GM12878 (cell line): ENCODE measurements at regions of chr16 and their contacts with region 1.

Region 1: DNA sequence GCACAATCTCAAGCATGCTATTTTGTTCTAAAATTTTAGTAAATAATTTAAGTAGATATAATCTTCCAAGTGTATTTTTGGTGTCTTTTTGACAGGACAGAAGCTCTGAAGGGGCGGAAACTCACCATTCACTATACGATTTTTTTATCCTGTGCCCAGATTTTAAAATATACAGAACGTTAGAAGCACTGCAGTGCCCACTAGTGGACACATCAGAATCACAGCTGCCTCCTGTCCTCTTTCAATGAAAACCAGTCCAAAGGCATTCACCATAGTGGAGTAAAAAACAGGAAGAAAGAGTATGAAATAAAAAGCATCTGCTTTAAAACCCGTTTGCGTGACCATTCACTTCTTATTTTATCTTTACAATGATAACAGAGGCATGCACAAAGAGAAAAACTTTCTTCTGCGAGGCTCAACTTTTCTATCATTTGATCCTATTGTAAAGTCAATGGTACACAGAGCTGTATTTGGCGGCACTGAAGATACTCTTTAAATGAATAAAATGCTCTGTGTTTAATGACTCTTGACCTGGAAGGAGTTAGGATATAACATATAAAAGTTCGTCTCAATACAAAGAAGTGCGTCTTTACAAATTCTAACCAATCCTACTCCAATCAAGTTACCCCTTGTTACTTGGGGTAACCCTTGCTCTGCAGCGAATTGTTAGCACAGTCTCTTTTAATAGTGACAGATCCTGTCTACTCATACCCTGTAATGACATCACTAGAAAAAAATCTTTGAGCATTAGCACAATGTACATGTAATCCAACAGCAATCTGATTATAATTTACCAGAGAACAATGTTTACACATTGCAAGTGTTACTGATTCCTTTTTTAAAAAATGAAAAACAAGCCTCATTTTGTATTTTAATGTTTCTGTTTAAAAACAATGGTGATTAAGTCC is 339.8 kb upstream of the PSMD7 start:
- DNase-seq: peak; percentile 2
- ATAC-seq: peak; percentile 82
- H3K4me3 ChIP-seq: no peak overlapping the region
- H3K27ac ChIP-seq: no peak overlapping the region
- H3K4me1 ChIP-seq: no peaks in the 10 kb centered on the region
- H3K27me3 ChIP-seq: no peaks in the 10 kb centered on the region
- CTCF ChIP-seq: peak; percentile 78 to 85 (median 78)
- EP300 ChIP-seq: no peak
- POLR2A ChIP-seq: no peak
- RAD21 ChIP-seq: peak; percentile 70

Region 2: DNA sequence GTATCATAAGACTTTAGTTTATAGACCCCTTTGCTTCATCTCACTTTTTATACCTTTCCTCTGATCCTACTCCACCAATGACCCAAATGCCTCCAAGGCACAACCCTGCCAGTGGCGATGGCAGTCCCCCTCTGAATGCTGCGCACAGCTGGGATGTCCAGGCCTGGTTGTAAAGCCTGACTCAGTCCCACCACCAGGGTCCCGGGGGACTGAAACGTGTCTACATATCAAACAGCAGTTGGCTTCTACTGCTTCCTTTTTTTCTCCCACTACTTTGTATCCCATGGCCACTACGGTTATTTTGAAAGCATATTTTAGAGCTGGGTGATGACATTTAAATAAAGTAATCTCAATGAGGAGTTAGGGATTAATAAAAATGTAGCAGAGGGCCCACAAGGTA is 10.0 kb after region 1 on chr16:
- CTCF ChIA-PET with region 1: interaction called, 17 read pairs
- POLR2A ChIA-PET with region 1: no interaction called
- RAD21 ChIA-PET with region 1: no interaction called
- SMC1A ChIA-PET with region 1: no interaction called
- in situ Hi-C with region 1: no loop called
- intact Hi-C with region 1: no loop called
- DNase-seq: no peak
- ATAC-seq: no peak
- H3K4me3 ChIP-seq: no peak overlapping the region
- H3K27ac ChIP-seq: no peak overlapping the region
- H3K4me1 ChIP-seq: no peaks in the 10 kb centered on the region
- H3K27me3 ChIP-seq: no peaks in the 10 kb centered on the region
- CTCF ChIP-seq: no peak
- EP300 ChIP-seq: no peak
- POLR2A ChIP-seq: no peak
- RAD21 ChIP-seq: no peak

Region 3: DNA sequence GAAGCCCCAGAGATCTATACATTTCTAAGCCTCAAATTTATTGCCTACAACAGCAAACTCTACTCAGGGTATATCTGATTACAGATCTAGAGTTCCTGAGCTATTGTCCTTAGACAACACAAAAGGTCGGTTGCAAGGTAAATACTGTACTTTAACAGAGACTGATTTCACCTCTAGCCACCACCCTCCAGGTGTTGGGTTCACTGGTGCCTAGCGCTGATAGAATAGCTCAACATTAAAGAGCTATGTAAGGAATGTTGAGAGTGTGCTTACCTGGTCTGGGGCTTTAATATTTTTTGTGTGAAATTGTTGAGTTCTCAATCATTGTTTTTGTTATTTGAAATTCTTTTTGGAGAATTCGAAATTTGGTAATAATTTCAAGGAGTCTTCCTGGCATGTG is 62.8 kb after region 1 on chr16:
- CTCF ChIA-PET with region 1: no interaction called
- POLR2A ChIA-PET with region 1: no interaction called
- RAD21 ChIA-PET with region 1: no interaction called
- SMC1A ChIA-PET with region 1: no interaction called
- in situ Hi-C with region 1: no loop called
- intact Hi-C with region 1: no loop called
- DNase-seq: no peak
- ATAC-seq: no peak
- H3K4me3 ChIP-seq: no peak overlapping the region
- H3K27ac ChIP-seq: no peak overlapping the region
- H3K4me1 ChIP-seq: no peaks in the 10 kb centered on the region
- H3K27me3 ChIP-seq: no peaks in the 10 kb centered on the region
- CTCF ChIP-seq: no peak
- EP300 ChIP-seq: no peak
- POLR2A ChIP-seq: no peak
- RAD21 ChIP-seq: no peak